Activated CD4-positive, alpha-beta T cell treated with anti-CD3 and anti-CD28 coated beads, Interleukin-2, amount 10 ng/mL, durations not matched to agents 24 days and 14 days (primary cell): ENCODE measurements at regions of chrX and their contacts with region 1.

Region 1: GRCh38 chrX:46912098-46912602 is at the start of gene JADE3:
- DNase-seq: peak; percentile 76
- H3K4me3 Mint-ChIP-seq: peak within 1 kb of the TSS; percentile 81
- H3K27ac Mint-ChIP-seq: no peak within 1 kb of the TSS
- H3K4me1 Mint-ChIP-seq: peaks cover 8% of the 10 kb centered on the region
- H3K27me3 Mint-ChIP-seq: peaks cover 62% of the 10 kb centered on the region
- total RNA-seq, gene JADE3: 1.5 and 1.6 TPM in 2 replicates

Region 2: GRCh38 chrX:46836701-46837557 is 75.2 kb before region 1 on chrX and contains the start of gene RP2:
- intact Hi-C with region 1: loop called (anchors 5 kb)
- DNase-seq: peak; percentile 95
- H3K4me3 Mint-ChIP-seq: peak within 1 kb of the TSS; percentile 98
- H3K27ac Mint-ChIP-seq: peak within 1 kb of the TSS; percentile 95
- H3K4me1 Mint-ChIP-seq: peaks cover 6% of the 10 kb centered on the region
- H3K27me3 Mint-ChIP-seq: peaks cover 6% of the 10 kb centered on the region
- total RNA-seq, gene RP2: 6.3 and 7.6 TPM in 2 replicates

Region 3: GRCh38 chrX:46978341-46979291 is 66.5 kb after region 1 on chrX:
- intact Hi-C with region 1: loop called (anchors 5 kb)
- DNase-seq: peak; percentile 88
- H3K4me3 Mint-ChIP-seq: no peak overlapping the region
- H3K27ac Mint-ChIP-seq: no peak overlapping the region
- H3K4me1 Mint-ChIP-seq: no peaks in the 10 kb centered on the region
- H3K27me3 Mint-ChIP-seq: peaks cover 9% of the 10 kb centered on the region

Region 4: GRCh38 chrX:47068720-47069119 is 156.6 kb after region 1 on chrX:
- intact Hi-C with region 1: no loop called
- DNase-seq: no peak
- H3K4me3 Mint-ChIP-seq: no peak overlapping the region
- H3K27ac Mint-ChIP-seq: no peak overlapping the region
- H3K4me1 Mint-ChIP-seq: no peaks in the 10 kb centered on the region
- H3K27me3 Mint-ChIP-seq: peaks cover 2% of the 10 kb centered on the region